ENCODE measurements at regions of chr1 and their contacts with region 1.

Region 1: DNA sequence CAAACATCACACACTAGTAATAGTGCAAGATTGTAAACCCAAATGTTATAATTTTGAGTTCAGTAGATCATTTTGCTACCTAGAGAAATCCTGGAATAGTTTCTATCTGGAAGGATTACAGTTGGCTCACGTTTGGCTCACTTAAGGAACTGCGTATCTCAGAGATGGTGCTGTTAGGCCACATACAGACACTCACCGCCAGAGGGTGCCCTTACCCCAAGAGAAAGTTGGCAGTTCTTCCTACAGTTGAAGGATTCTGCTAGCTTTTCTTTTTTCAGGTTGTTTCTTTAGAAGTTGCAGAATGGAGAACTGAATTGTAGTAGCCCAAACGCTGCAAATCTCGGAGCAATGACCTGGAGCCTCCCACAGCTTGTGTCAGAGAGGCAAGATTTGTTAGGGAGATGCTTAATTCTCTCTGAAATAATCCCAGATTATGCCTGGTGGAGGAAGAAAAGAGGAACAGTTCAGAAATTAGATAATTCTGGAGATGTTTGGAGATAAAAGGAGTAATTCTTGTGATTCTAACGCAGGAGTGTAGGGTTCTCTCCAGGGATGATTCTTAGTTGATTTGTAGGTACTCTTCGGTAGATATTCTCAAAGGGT is 87.9 kb upstream of the PAPPA2 start:
- DNase-seq: peak; percentile 65 to 78
- H3K4me3 ChIP-seq: no peak overlapping the region
- H3K4me3 Mint-ChIP-seq: no peak overlapping the region
- H3K27ac Mint-ChIP-seq: no peak overlapping the region
- H3K4me1 ChIP-seq: no peaks in the 10 kb centered on the region
- H3K4me1 Mint-ChIP-seq: no peaks in the 10 kb centered on the region
- H3K27me3 ChIP-seq: no peaks in the 10 kb centered on the region
- H3K27me3 Mint-ChIP-seq: peaks cover 9% of the 10 kb centered on the region
- CTCF ChIP-seq: peak; percentile 76 to 90

Region 2: DNA sequence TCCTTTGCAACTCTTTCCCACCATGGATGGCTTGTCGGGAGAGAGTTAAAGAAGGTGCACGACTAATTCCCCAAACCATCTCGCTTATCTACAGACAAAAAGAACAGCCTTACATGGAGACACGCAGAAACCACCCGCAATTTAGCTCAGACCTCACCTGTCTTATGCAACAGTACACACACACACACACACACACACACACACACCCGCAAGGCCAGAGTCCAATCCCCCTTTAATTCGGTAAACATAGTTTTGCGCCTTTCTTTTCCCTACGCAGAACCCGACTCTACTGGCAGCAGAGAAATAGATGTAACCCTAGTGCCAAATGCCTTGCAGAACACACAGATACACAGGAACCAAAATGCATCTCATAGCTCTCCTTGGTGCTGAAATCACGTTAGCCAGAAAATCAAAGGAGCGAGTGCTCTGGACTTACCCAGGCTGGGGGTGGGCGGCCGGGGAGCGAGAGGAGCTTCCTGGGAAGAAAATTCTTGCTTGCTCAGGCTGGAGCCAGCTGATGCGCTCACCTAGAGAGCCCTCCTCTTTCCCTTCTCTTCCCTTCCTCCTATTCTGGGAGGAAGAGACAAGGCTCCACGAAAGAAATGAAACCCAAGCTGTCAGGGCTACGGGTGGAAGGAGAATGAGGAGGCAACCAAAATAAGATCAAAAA is 632.1 kb before region 1 on chr1:
- CTCF ChIA-PET with region 1: interaction called, 10 read pairs
- POLR2A ChIA-PET with region 1: no interaction called
- intact Hi-C with region 1: no loop called
- DNase-seq: peak in 1 of 2 experiments; percentile 46
- H3K4me3 ChIP-seq: no peak overlapping the region
- H3K4me3 Mint-ChIP-seq: no peak overlapping the region
- H3K27ac Mint-ChIP-seq: no peak overlapping the region
- H3K4me1 ChIP-seq: no peaks in the 10 kb centered on the region
- H3K4me1 Mint-ChIP-seq: peaks cover 13% of the 10 kb centered on the region
- H3K27me3 ChIP-seq: no peaks in the 10 kb centered on the region
- H3K27me3 Mint-ChIP-seq: peaks cover 12% of the 10 kb centered on the region
- CTCF ChIP-seq: no peak

Region 3: GRCh38 chr1:176466514-176467220 is 91.6 kb after region 1 on chr1:
- CTCF ChIA-PET with region 1: no interaction called
- POLR2A ChIA-PET with region 1: no interaction called
- intact Hi-C with region 1: loop called (anchors 1 kb)
- DNase-seq: peak; percentile 36 to 51
- H3K4me3 ChIP-seq: no peak overlapping the region
- H3K4me3 Mint-ChIP-seq: no peak overlapping the region
- H3K27ac Mint-ChIP-seq: no peak overlapping the region
- H3K4me1 ChIP-seq: no peaks in the 10 kb centered on the region
- H3K4me1 Mint-ChIP-seq: no peaks in the 10 kb centered on the region
- H3K27me3 ChIP-seq: peaks cover 2% of the 10 kb centered on the region; the same call in 1 of the 2 replicates
- H3K27me3 Mint-ChIP-seq: peaks cover 6% of the 10 kb centered on the region
- CTCF ChIP-seq: peak; percentile 64 to 83

Region 4: DNA sequence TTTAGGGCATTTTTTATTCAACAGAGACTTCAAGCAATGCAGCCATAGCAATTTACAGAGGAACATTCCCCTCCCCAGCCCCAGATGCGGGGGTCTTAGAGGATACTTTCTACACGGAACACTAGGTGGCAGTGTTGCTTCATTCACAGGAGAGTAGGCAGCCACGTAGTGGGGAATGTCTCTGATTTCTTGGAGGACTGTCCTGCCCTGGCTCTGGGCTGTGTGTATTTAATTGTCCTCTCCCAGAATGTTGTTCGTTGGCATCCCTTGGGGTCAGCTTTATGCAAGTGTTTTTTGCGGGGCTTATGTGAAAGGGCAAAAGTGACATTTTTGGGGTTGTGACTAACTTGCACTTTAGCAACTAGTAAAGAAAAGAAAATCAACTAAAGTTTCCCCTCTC is 184.8 kb after region 1 on chr1:
- CTCF ChIA-PET with region 1: no interaction called
- POLR2A ChIA-PET with region 1: no interaction called
- intact Hi-C with region 1: loop called (anchors 5 kb)
- DNase-seq: peak; percentile 48 to 60
- H3K4me3 ChIP-seq: no peak overlapping the region
- H3K4me3 Mint-ChIP-seq: no peak overlapping the region
- H3K27ac Mint-ChIP-seq: no peak overlapping the region
- H3K4me1 ChIP-seq: no peaks in the 10 kb centered on the region
- H3K4me1 Mint-ChIP-seq: no peaks in the 10 kb centered on the region
- H3K27me3 ChIP-seq: no peaks in the 10 kb centered on the region
- H3K27me3 Mint-ChIP-seq: peaks cover 16% of the 10 kb centered on the region
- CTCF ChIP-seq: peak; percentile 83 to 85

Region 5: DNA sequence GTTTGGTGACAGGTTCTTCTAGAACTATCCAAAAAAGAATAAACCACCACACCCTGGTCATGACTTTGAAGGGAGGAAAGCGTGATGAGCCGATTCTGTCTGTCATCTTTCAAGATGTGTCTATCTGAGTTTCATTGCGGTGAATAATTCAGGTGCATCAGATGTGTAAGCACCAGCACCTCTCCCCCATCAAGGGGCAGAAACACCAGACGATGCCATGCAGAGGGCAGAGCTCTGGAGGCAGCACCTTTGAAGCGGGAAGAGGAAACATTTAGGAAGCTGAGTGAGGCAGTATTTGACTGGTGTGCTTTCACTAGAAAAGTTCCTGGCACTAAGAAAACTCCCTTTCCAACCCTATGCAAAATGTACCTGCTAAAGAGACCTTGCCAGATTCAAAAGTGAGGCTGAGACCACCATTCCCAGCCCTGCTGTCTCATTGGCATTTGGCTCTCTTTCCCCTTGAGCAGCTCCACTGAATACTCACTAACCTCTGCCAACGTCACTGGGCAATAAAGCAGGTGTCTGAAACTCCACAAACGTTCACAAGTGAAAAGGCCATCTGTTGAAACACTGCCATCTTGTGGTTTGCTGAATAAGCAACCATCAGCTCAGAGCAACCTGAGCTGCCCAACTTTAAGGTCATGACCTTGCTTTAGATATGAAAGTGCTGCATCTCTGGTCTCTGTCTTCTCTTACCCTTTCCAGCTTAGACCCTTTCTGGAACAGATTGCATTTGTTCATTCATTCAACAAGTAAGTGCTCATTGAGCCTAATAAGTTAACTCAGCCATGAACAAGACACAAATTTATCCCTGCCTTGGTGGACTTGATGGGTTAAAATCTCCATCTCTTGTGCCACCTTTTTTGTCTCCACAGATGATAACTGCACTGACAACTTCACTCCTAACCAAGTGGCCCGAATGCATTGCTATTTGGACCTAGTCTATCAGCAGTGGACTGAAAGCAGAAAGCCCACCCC is 316.5 kb after region 1 on chr1:
- CTCF ChIA-PET with region 1: interaction called, 8 read pairs
- POLR2A ChIA-PET with region 1: no interaction called
- intact Hi-C with region 1: loop called (anchors 1 kb)
- DNase-seq: peak; percentile 56 to 61
- H3K4me3 ChIP-seq: no peak overlapping the region
- H3K4me3 Mint-ChIP-seq: no peak overlapping the region
- H3K27ac Mint-ChIP-seq: no peak overlapping the region
- H3K4me1 ChIP-seq: no peaks in the 10 kb centered on the region
- H3K4me1 Mint-ChIP-seq: no peaks in the 10 kb centered on the region
- H3K27me3 ChIP-seq: no peaks in the 10 kb centered on the region
- H3K27me3 Mint-ChIP-seq: peaks cover 16% of the 10 kb centered on the region
- CTCF ChIP-seq: peak; percentile 71 to 76

Region 6: DNA sequence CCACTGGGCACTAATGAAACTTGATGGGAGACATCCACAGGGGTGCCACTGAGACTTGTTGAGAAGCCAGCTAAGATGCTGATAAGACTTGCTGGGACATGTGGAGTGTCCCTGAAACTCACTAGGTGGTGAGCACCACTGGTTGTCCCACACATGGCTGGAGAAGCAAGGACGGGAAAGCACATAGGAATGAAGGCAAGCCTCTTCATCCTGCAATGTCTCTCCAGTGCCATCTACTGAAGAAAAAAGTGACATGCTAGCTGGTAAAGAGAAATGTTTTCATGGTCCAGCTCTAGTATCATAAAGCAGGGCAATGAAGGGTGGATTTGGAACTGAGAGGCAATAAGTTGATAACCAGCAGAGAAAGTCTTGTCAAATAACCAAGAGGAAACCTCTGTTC is 370.9 kb after region 1 on chr1:
- CTCF ChIA-PET with region 1: no interaction called
- POLR2A ChIA-PET with region 1: no interaction called
- intact Hi-C with region 1: loop called (anchors 1 kb)
- DNase-seq: peak in 1 of 2 experiments; percentile 9
- H3K4me3 ChIP-seq: no peak overlapping the region
- H3K4me3 Mint-ChIP-seq: no peak overlapping the region
- H3K27ac Mint-ChIP-seq: no peak overlapping the region
- H3K4me1 ChIP-seq: no peaks in the 10 kb centered on the region
- H3K4me1 Mint-ChIP-seq: no peaks in the 10 kb centered on the region
- H3K27me3 ChIP-seq: no peaks in the 10 kb centered on the region
- H3K27me3 Mint-ChIP-seq: peaks cover 3% of the 10 kb centered on the region
- CTCF ChIP-seq: peak in 1 of 2 experiments; percentile 19

Region 7: GRCh38 chr1:176880954-176881595 is 506.0 kb after region 1 on chr1:
- CTCF ChIA-PET with region 1: no interaction called
- POLR2A ChIA-PET with region 1: no interaction called
- intact Hi-C with region 1: loop called (anchors 2 kb)
- DNase-seq: peak; percentile 72 to 75
- H3K4me3 ChIP-seq: no peak overlapping the region
- H3K4me3 Mint-ChIP-seq: no peak overlapping the region
- H3K27ac Mint-ChIP-seq: no peak overlapping the region
- H3K4me1 ChIP-seq: no peaks in the 10 kb centered on the region
- H3K4me1 Mint-ChIP-seq: no peaks in the 10 kb centered on the region
- H3K27me3 ChIP-seq: no peaks in the 10 kb centered on the region
- H3K27me3 Mint-ChIP-seq: peaks cover 18% of the 10 kb centered on the region
- CTCF ChIP-seq: peak; percentile 78 to 83

Region 8: GRCh38 chr1:177200290-177200689 is 825.2 kb after region 1 on chr1:
- CTCF ChIA-PET with region 1: no interaction called
- POLR2A ChIA-PET with region 1: no interaction called
- intact Hi-C with region 1: no loop called
- DNase-seq: no peak
- H3K4me3 ChIP-seq: no peak overlapping the region
- H3K4me3 Mint-ChIP-seq: no peak overlapping the region
- H3K27ac Mint-ChIP-seq: no peak overlapping the region
- H3K4me1 ChIP-seq: no peaks in the 10 kb centered on the region
- H3K4me1 Mint-ChIP-seq: no peaks in the 10 kb centered on the region
- H3K27me3 ChIP-seq: no peaks in the 10 kb centered on the region
- H3K27me3 Mint-ChIP-seq: peaks cover 7% of the 10 kb centered on the region
- CTCF ChIP-seq: no peak

Measured in Caco-2 (cell line).